IMR-90 (cell line): ENCODE measurements at regions of chr13 and their contacts with region 1.

Region 1: GRCh38 chr13:65656740-65657329 is 1573.3 kb downstream of the PCDH9 start:
- DNase-seq: peak; percentile 30
- ATAC-seq: no peak
- H3K4me3 ChIP-seq: no peak overlapping the region
- H3K27ac ChIP-seq: no peak overlapping the region
- H3K4me1 ChIP-seq: no peaks in the 10 kb centered on the region
- H3K27me3 ChIP-seq: no peaks in the 10 kb centered on the region
- CTCF ChIP-seq: peak; percentile 76
- POLR2A ChIP-seq: no peak
- RAD21 ChIP-seq: peak; percentile 81

Region 2: DNA sequence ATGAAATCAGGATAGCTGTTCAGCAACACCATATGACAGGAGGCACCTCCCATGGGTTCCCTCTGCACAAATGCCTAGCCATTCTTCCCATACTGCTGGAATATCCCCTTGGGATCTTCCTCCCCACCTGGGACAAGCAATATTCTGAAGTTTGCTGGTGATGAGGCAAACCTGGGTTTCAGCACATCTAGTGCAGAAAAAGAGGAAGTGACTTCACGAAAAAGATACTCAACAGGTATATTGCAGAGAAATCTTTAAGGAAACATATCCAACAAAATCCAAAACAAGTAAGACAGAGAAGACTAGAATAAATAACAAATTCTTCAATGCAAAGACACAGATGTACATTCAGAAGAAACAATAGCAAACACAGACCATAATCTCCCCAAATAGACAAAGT is 76.3 kb after region 1 on chr13:
- CTCF ChIA-PET with region 1: no interaction called
- POLR2A ChIA-PET with region 1: no interaction called
- dilution Hi-C with region 1: no loop called
- in situ Hi-C with region 1: no loop called
- intact Hi-C with region 1: no loop called
- DNase-seq: no peak
- ATAC-seq: no peak
- H3K4me3 ChIP-seq: no peak overlapping the region
- H3K27ac ChIP-seq: no peak overlapping the region
- H3K4me1 ChIP-seq: no peaks in the 10 kb centered on the region
- H3K27me3 ChIP-seq: no peaks in the 10 kb centered on the region
- CTCF ChIP-seq: no peak
- POLR2A ChIP-seq: no peak
- RAD21 ChIP-seq: no peak

Region 3: GRCh38 chr13:65856431-65856830 is 199.6 kb after region 1 on chr13:
- CTCF ChIA-PET with region 1: no interaction called
- POLR2A ChIA-PET with region 1: no interaction called
- dilution Hi-C with region 1: no loop called
- in situ Hi-C with region 1: no loop called
- intact Hi-C with region 1: loop called (anchors 2 kb)
- DNase-seq: peak; percentile 80
- ATAC-seq: peak; percentile 89
- H3K4me3 ChIP-seq: no peak overlapping the region
- H3K27ac ChIP-seq: no peak overlapping the region
- H3K4me1 ChIP-seq: no peaks in the 10 kb centered on the region
- H3K27me3 ChIP-seq: no peaks in the 10 kb centered on the region
- CTCF ChIP-seq: no peak
- POLR2A ChIP-seq: no peak
- RAD21 ChIP-seq: no peak

Region 4: GRCh38 chr13:66689628-66690027 is 1032.8 kb after region 1 on chr13:
- CTCF ChIA-PET with region 1: no interaction called
- POLR2A ChIA-PET with region 1: no interaction called
- dilution Hi-C with region 1: no loop called
- in situ Hi-C with region 1: loop called (anchors 10 kb)
- intact Hi-C with region 1: loop called (anchors 5 kb)
- DNase-seq: peak; percentile 40
- ATAC-seq: peak; percentile 49
- H3K4me3 ChIP-seq: no peak overlapping the region
- H3K27ac ChIP-seq: no peak overlapping the region
- H3K4me1 ChIP-seq: no peaks in the 10 kb centered on the region
- H3K27me3 ChIP-seq: no peaks in the 10 kb centered on the region
- CTCF ChIP-seq: peak; percentile 42
- POLR2A ChIP-seq: no peak
- RAD21 ChIP-seq: peak; percentile 51

Region 5: DNA sequence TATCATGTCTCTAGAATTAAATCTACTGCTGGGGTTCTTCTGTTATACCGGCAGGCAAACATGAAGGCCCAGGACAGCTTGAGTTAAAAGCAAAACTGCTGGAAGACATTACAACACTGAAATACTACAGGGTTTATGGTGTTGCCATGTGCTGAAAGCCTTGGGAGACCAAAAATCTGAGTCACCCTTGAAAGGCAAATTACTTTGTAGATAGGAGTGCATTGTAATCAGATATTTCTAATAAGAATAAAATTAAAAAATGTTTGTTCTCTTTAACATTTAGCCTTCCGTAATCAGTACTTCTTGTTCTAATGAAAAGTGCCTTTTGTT is 1392.0 kb after region 1 on chr13:
- CTCF ChIA-PET with region 1: no interaction called
- POLR2A ChIA-PET with region 1: no interaction called
- dilution Hi-C with region 1: no loop called
- in situ Hi-C with region 1: no loop called
- intact Hi-C with region 1: no loop called
- DNase-seq: peak; percentile 82
- ATAC-seq: peak; percentile 77
- H3K4me3 ChIP-seq: no peak overlapping the region
- H3K27ac ChIP-seq: peak overlapping the region; percentile 98
- H3K4me1 ChIP-seq: peaks cover 4% of the 10 kb centered on the region
- H3K27me3 ChIP-seq: no peaks in the 10 kb centered on the region
- CTCF ChIP-seq: no peak
- POLR2A ChIP-seq: no peak
- RAD21 ChIP-seq: no peak

Region 6: GRCh38 chr13:67230404-67231288 is 1573.8 kb after region 1 on chr13:
- CTCF ChIA-PET with region 1: no interaction called
- POLR2A ChIA-PET with region 1: no interaction called
- dilution Hi-C with region 1: no loop called
- in situ Hi-C with region 1: loop called (anchors 5 kb)
- intact Hi-C with region 1: loop called (anchors 5 kb)
- DNase-seq: peak; percentile 97
- ATAC-seq: peak; percentile 94
- H3K4me3 ChIP-seq: peak overlapping the region; percentile 76
- H3K27ac ChIP-seq: peak overlapping the region; percentile 59
- H3K4me1 ChIP-seq: no peaks in the 10 kb centered on the region; the same call in 1 of the 2 replicates
- H3K27me3 ChIP-seq: no peaks in the 10 kb centered on the region
- CTCF ChIP-seq: no peak
- POLR2A ChIP-seq: no peak; the same call in 1 of the 2 replicates
- RAD21 ChIP-seq: peak; percentile 1; the same call in 1 of the 2 replicates

Region 7: GRCh38 chr13:67416047-67416925 is 1759.5 kb after region 1 on chr13:
- CTCF ChIA-PET with region 1: no interaction called
- POLR2A ChIA-PET with region 1: no interaction called
- dilution Hi-C with region 1: no loop called
- in situ Hi-C with region 1: no loop called
- intact Hi-C with region 1: loop called (anchors 5 kb)
- DNase-seq: peak; percentile 29
- ATAC-seq: peak; percentile 97
- H3K4me3 ChIP-seq: no peak overlapping the region
- H3K27ac ChIP-seq: no peak overlapping the region
- H3K4me1 ChIP-seq: no peaks in the 10 kb centered on the region
- H3K27me3 ChIP-seq: no peaks in the 10 kb centered on the region
- CTCF ChIP-seq: peak; percentile 73
- POLR2A ChIP-seq: no peak
- RAD21 ChIP-seq: peak; percentile 80